Gastrocnemius medialis (tissue), 4 donors: ENCODE measurements at regions of chr17 and their contacts with region 1.

Region 1: GRCh38 chr17:27601069-27601975 is 29.7 kb upstream of the LGALS9 start:
- DNase-seq: peak; percentile 45 to 64
- ATAC-seq: peak; percentile 50 to 64
- H3K4me3 ChIP-seq: no peak overlapping the region
- H3K27ac ChIP-seq: peak overlapping the region in 3 of 4 donors; percentile 6 to 17 (median 11)
- H3K4me1 ChIP-seq: peaks cover 0 to 3% of the 10 kb centered on the region in 2 donors
- H3K27me3 ChIP-seq: no peaks in the 10 kb centered on the region
- CTCF ChIP-seq: peak; percentile 83 to 94 (median 90)
- POLR2A ChIP-seq: no peak

Region 2: GRCh38 chr17:27236717-27237315 is 364.5 kb before region 1 on chr17:
- in situ Hi-C with region 1: loop called (anchors 5 to 10 kb)
- intact Hi-C with region 1: loop called (anchors 2 kb)
- DNase-seq: peak; percentile 38 to 70
- ATAC-seq: peak; percentile 87 to 89
- H3K4me3 ChIP-seq: no peak overlapping the region
- H3K27ac ChIP-seq: no peak overlapping the region
- H3K4me1 ChIP-seq: peaks cover 0 to 3% of the 10 kb centered on the region in 2 donors
- H3K27me3 ChIP-seq: no peaks in the 10 kb centered on the region
- CTCF ChIP-seq: peak; percentile 87 to 94 (median 92)
- POLR2A ChIP-seq: no peak

Region 3: DNA sequence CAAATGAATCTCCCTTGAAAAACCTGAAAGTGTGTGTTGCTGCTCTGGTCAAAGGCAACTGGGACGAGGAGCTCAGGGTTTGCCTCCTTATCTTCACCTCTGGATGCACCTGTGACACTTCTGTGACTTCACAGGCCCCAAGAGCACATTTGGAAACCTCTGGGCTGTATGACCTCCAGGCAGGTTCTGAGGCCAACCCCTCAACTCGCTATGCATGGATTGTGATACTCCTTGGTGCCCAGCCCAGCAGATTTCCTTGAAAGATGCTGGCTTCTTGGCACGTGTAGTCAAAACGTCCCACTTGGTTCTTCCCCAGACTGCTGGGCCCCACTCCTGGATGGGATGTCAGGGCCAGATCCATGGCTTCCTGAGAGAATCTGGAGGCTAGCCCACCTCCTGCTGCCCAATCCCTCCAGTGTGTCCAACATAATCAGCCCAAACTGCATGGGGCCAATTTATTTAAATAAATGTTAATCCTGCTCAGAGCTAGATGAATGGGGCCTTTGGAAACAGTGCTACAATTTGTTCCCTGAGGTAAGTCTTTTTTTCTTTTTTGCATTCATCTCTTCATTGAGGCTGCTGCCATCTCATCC is 258.1 kb before region 1 on chr17:
- in situ Hi-C with region 1: no loop called
- intact Hi-C with region 1: no loop called
- DNase-seq: no peak
- ATAC-seq: no peak
- H3K4me3 ChIP-seq: no peak overlapping the region
- H3K27ac ChIP-seq: no peak overlapping the region
- H3K4me1 ChIP-seq: peaks cover 8 to 10% of the 10 kb centered on the region in 2 donors
- H3K27me3 ChIP-seq: no peaks in the 10 kb centered on the region
- CTCF ChIP-seq: no peak
- POLR2A ChIP-seq: no peak

Region 4: DNA sequence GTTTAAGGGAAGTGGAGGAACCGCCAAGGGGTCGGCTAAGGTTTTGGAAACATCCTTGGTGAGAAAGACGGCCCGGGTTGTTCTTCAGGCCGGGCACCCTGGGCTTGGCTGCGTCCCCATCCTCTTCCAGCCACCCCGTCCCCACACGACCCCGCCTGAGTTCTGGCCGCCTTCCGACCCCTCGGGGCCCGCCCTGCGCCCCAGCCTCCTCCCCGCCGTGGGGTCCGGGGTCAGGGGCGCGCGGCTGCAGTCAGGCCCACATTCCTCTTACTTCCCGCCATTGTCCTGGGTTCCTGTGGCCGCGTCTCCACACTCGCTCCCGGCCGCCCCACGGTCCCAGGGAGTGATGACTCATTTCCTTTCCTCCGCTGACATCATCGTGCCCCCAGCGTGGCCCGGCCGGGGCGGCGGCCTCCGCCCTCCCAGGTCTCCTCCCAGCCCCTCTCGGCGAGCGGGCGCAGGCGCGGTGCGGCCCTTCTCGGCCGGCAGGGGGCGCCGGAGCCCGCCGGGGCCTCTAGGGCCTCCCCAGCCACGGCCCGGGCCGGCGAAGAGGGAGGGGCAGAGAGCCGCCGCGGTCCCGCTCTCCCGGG is 247.8 kb before region 1 on chr17:
- in situ Hi-C with region 1: loop called (anchors 5 to 10 kb)
- intact Hi-C with region 1: loop called (anchors 1 kb)
- DNase-seq: peak; percentile 69 to 84
- ATAC-seq: peak; percentile 83 to 85
- H3K4me3 ChIP-seq: peak overlapping the region; percentile 62 to 66 (median 65)
- H3K27ac ChIP-seq: peak overlapping the region; percentile 79 to 88 (median 84)
- H3K4me1 ChIP-seq: peaks cover 11 to 16% of the 10 kb centered on the region in 2 donors
- H3K27me3 ChIP-seq: no peaks in the 10 kb centered on the region
- CTCF ChIP-seq: peak; percentile 78 to 100 (median 99)
- POLR2A ChIP-seq: peak; percentile 79 to 89

Region 5: DNA sequence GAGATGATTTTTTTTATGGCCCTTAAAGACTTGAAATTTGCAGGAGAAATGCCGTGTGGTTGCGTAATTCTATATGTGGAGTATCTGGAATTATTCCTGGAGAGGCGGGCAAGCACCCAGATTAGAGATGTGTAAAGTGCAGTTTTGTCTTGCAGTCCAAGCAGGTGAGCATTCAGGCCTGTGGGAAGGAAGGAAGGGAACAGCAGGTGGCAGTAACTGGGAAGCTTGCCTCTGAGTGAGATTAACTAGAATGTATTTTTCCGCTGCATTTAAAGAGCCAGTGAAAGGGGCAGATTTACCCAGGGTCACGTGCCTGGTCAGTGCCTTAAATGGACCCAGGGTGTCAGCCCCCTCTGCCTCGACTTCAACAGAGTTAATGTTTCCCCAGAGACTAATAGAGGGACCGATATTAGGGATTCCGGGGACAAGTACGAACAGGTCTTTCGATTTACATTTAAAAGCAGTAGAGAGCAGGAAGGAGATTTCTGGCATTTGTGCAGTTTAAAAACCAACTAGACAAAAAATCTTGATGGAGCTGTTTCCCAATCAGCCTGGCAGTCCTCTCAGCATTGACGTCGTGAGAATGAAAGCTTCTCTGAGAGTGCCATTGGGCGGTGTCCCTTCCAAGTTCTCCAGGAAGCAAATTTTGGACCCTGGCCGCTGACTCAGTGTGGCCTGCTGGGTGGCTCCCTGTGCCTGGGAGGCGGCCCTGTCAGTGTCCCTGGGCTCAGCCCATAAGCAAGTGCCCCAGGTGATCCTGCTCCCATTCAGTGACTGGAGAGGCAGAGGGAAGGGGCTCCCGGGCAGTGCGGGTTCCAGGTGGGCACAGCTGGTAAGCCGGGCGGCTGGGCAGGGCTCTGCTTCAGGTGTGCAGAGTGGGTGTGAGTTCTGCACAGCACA is 106.9 kb before region 1 on chr17:
- in situ Hi-C with region 1: loop called in 2 of 4 experiments (anchors 10 to 25 kb)
- intact Hi-C with region 1: loop called (anchors 1 kb)
- DNase-seq: peak; percentile 34 to 73
- ATAC-seq: peak; percentile 73 to 84
- H3K4me3 ChIP-seq: peak overlapping the region; percentile 12 to 36 (median 18)
- H3K27ac ChIP-seq: peak overlapping the region; percentile 5 to 27 (median 13)
- H3K4me1 ChIP-seq: peaks cover 18% of the 10 kb centered on the region in 2 donors
- H3K27me3 ChIP-seq: no peaks in the 10 kb centered on the region
- CTCF ChIP-seq: peak; percentile 33 to 63 (median 44)
- POLR2A ChIP-seq: no peak

Region 6: DNA sequence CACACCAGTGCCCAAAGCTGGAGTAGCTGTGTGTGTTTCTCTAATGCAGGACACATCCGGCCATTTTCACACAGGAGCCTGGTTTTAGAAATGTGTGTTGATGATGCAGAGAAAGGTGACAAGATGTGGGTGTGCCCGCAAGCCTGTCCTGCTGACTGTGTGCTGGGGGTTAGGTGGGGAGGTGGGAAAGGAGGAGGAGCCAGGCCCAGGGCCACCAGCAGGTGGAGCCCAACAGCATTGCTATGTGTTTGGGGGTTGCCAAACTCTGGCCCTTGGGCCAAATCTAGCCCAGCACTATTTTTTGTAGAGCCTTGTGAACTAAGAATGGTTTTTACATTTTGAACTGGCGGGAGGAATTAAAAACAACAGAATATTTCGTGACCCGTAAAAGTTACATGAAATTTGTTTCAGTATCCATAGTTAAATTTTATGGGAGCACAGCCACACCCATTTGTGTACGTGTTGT is 32.0 kb before region 1 on chr17:
- in situ Hi-C with region 1: no loop called
- intact Hi-C with region 1: loop called (anchors 1 kb)
- DNase-seq: peak in 1 of 2 donors; percentile 76
- ATAC-seq: peak; percentile 17 to 25
- H3K4me3 ChIP-seq: no peak overlapping the region
- H3K27ac ChIP-seq: peak overlapping the region; percentile 95 to 99 (median 97)
- H3K4me1 ChIP-seq: peaks cover 69 to 76% of the 10 kb centered on the region in 2 donors
- H3K27me3 ChIP-seq: no peaks in the 10 kb centered on the region
- CTCF ChIP-seq: peak; percentile 40 to 87 (median 76)
- POLR2A ChIP-seq: no peak

Region 7: DNA sequence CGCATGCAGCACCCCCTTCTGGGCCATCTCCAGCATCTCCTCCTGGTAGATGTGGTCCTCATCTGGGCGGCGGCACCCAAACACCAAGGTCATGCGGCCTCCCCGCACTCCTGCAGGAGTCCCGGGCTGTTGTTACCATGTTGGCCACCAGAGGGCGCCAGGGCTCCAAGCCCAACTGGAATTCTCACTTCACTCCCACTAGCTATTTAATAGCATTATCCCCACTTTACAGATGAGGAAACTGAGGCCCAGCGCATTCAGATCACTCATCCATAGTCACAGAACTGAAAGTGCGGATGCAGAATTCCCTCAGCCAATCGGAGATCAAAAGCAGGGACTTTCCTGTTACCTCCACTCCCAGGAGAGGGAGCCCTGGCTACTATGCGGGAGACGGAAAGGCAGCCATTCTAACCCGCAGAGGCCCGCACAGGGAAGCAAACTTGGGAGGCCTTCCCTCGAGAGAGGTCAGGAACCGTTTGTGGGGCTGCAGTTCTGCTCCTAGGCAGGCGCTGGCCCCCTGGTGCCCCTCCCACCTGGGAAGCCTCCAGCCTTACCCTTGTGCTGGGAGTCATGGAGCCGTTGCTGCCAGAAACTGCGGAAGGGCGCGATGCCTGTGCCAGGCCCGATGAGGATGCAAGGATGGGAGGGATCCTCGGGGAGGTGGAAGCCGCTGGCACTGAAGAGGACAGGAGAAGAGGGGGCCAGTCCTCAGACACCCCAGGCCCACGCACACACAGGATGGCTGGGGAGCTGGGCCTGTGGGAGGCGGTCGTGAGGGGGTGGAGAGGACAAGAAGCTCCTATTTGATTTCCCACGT is 159.0 kb after region 1 on chr17:
- in situ Hi-C with region 1: no loop called
- intact Hi-C with region 1: loop called (anchors 5 kb)
- DNase-seq: peak in 1 of 2 donors; percentile 40
- ATAC-seq: no peak
- H3K4me3 ChIP-seq: no peak overlapping the region
- H3K27ac ChIP-seq: no peak overlapping the region
- H3K4me1 ChIP-seq: no peaks in the 10 kb centered on the region
- H3K27me3 ChIP-seq: no peaks in the 10 kb centered on the region
- CTCF ChIP-seq: peak; percentile 41 to 89 (median 75)
- POLR2A ChIP-seq: no peak